CD4-positive, alpha-beta memory T cell (primary cell): ENCODE measurements at regions of chr12 and their contacts with region 1.

Region 1: DNA sequence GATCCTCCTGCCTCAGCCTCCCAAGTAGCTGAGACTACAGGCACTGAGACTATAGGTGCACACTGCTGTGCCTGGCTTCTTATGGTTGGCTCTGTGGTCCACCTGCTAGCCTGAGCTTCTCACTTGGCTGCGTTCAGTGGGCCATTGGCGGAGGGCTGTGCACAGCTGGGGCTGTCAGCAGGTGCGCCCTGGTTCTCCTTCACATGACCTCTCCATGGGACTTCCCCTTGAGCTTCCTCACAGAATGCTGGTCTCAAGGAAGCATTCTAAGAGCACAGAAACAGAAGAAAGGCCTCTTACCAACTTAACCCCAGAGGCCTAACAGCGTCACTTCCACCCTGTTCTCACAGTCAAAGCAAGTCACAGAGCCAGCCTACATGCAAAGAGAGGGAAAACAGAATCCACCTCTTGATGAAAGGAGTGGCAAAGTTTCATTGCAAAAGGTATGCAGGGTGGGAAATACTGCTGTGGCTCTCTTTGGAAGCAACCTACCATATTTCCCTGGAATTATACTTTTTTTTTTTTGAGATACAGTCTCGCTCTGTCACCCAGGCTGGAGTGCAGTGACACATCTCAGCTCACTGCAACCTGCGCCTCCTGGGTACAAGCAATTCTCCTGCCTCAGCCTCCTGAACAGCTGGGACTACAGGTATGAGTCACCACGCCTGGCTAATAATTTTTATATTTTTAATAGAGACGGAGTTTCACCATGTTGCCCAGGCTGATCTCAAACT is 9.3 kb downstream of the RILPL2 start:
- DNase-seq: peak; percentile 59 to 76 (median 69)
- H3K4me3 ChIP-seq: no peak overlapping the region
- H3K4me3 Mint-ChIP-seq: peak overlapping the region in 7 of 8 donors; percentile 10 to 73 (median 48)
- H3K27ac ChIP-seq: peak overlapping the region; percentile 44
- H3K27ac Mint-ChIP-seq: peak overlapping the region; percentile 85 to 94 (median 90)
- H3K4me1 ChIP-seq: peaks cover 36% of the 10 kb centered on the region
- H3K4me1 Mint-ChIP-seq: peaks cover 21 to 43% (median 29%) of the 10 kb centered on the region in 4 donors
- H3K27me3 ChIP-seq: no peaks in the 10 kb centered on the region
- H3K27me3 Mint-ChIP-seq: no peaks in the 10 kb centered on the region

Region 2: GRCh38 chr12:123445388-123446351 is 18.5 kb after region 1 on chr12:
- CTCF ChIA-PET with region 1: interaction called, 3 read pairs
- POLR2A ChIA-PET with region 1: interaction called, 141 read pairs
- intact Hi-C with region 1: no loop called
- DNase-seq: no peak
- H3K4me3 ChIP-seq: no peak overlapping the region
- H3K4me3 Mint-ChIP-seq: peak overlapping the region; percentile 63 to 75 (median 72)
- H3K27ac ChIP-seq: peak overlapping the region; percentile 18
- H3K27ac Mint-ChIP-seq: peak overlapping the region; percentile 77 to 95 (median 86)
- H3K4me1 ChIP-seq: peaks cover 38% of the 10 kb centered on the region
- H3K4me1 Mint-ChIP-seq: peaks cover 20 to 42% (median 34%) of the 10 kb centered on the region in 4 donors
- H3K27me3 ChIP-seq: no peaks in the 10 kb centered on the region
- H3K27me3 Mint-ChIP-seq: no peaks in the 10 kb centered on the region

Region 3: GRCh38 chr12:123468562-123469185 is 41.5 kb after region 1 on chr12:
- CTCF ChIA-PET with region 1: no interaction called
- POLR2A ChIA-PET with region 1: no interaction called
- intact Hi-C with region 1: loop called (anchors 5 kb)
- DNase-seq: peak in 3 of 5 donors; percentile 33 to 39 (median 37)
- H3K4me3 ChIP-seq: no peak overlapping the region
- H3K4me3 Mint-ChIP-seq: no peak overlapping the region
- H3K27ac ChIP-seq: no peak overlapping the region
- H3K27ac Mint-ChIP-seq: peak overlapping the region in 3 of 7 donors; percentile 24 to 42 (median 31)
- H3K4me1 ChIP-seq: peaks cover 4% of the 10 kb centered on the region
- H3K4me1 Mint-ChIP-seq: peaks cover 9 to 24% (median 14%) of the 10 kb centered on the region in 4 donors
- H3K27me3 ChIP-seq: no peaks in the 10 kb centered on the region
- H3K27me3 Mint-ChIP-seq: no peaks in the 10 kb centered on the region

Region 4: GRCh38 chr12:123478762-123479161 is 51.6 kb after region 1 on chr12:
- CTCF ChIA-PET with region 1: interaction called, 3 read pairs
- POLR2A ChIA-PET with region 1: interaction called, 11 read pairs
- intact Hi-C with region 1: no loop called
- DNase-seq: no peak
- H3K4me3 ChIP-seq: no peak overlapping the region
- H3K4me3 Mint-ChIP-seq: no peak overlapping the region
- H3K27ac ChIP-seq: no peak overlapping the region
- H3K27ac Mint-ChIP-seq: peak overlapping the region in 2 of 7 donors; percentile 32 to 52
- H3K4me1 ChIP-seq: peaks cover 31% of the 10 kb centered on the region
- H3K4me1 Mint-ChIP-seq: peaks cover 22 to 49% (median 35%) of the 10 kb centered on the region in 4 donors
- H3K27me3 ChIP-seq: no peaks in the 10 kb centered on the region
- H3K27me3 Mint-ChIP-seq: no peaks in the 10 kb centered on the region